Transverse colon (tissue), 4 donors: ENCODE measurements at regions of chr10 and their contacts with region 1.

Region 1: GRCh38 chr10:20927456-20927855 is 30.3 kb upstream of the NEBL start:
- DNase-seq: no peak
- H3K4me3 ChIP-seq: no peak overlapping the region
- H3K27ac ChIP-seq: no peak overlapping the region
- H3K4me1 ChIP-seq: no peaks in the 10 kb centered on the region
- H3K27me3 ChIP-seq: no peaks in the 10 kb centered on the region
- CTCF ChIP-seq: no peak
- EP300 ChIP-seq: no peak
- POLR2A ChIP-seq: no peak

Region 2: DNA sequence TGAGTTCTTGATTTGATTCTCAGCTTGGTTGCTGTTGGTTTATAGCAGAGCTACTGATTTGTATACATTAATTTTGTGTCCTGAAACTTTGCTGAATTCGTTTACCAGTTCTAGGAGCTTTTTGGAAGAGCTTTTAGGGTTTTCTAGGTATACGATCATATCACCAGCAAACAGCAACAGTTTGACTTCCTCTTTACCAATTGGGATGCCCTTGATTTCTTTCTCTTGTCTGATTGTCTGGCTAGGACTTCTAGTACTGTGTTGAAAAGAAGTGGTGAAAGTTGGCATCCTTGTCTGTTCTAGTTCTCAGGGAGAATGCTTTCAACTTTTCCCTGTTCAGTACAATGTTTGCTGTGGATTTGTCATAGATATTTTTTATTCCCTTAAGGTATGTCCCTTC is 1025.0 kb before region 1 on chr10:
- in situ Hi-C with region 1: no loop called
- intact Hi-C with region 1: no loop called
- DNase-seq: no peak
- H3K4me3 ChIP-seq: no peak overlapping the region
- H3K27ac ChIP-seq: no peak overlapping the region
- H3K4me1 ChIP-seq: peaks cover 0 to 7% (median 2%) of the 10 kb centered on the region in 4 donors
- H3K27me3 ChIP-seq: no peaks in the 10 kb centered on the region
- CTCF ChIP-seq: no peak
- EP300 ChIP-seq: no peak
- POLR2A ChIP-seq: no peak

Region 3: GRCh38 chr10:19961076-19962053 is 966.1 kb before region 1 on chr10:
- in situ Hi-C with region 1: no loop called
- intact Hi-C with region 1: loop called (anchors 5 kb)
- DNase-seq: no peak
- H3K4me3 ChIP-seq: no peak overlapping the region
- H3K27ac ChIP-seq: no peak overlapping the region
- H3K4me1 ChIP-seq: peaks cover 0 to 25% (median 5%) of the 10 kb centered on the region in 4 donors
- H3K27me3 ChIP-seq: no peaks in the 10 kb centered on the region
- CTCF ChIP-seq: no peak
- EP300 ChIP-seq: no peak
- POLR2A ChIP-seq: no peak

Region 4: DNA sequence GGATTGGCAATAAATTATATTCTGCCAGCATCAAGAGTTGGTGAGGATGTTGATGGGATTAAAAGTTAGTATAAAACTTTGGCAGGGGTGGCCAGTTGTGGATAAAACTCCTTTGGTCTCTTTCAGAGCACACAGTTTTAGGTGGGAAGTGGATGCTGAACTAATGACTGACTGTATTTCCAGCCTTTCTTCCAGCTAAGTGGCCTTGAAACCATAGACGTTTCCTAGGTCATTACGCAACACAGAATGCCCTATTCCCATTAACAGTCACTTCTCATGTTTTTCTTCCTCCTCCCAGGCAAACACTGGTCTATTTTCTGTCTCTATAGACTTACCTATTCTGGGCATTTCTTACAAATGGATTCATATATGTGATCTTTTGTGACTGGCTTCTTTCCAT is 497.7 kb before region 1 on chr10:
- in situ Hi-C with region 1: no loop called
- intact Hi-C with region 1: no loop called
- DNase-seq: no peak
- H3K4me3 ChIP-seq: no peak overlapping the region
- H3K27ac ChIP-seq: no peak overlapping the region
- H3K4me1 ChIP-seq: no peaks in the 10 kb centered on the region
- H3K27me3 ChIP-seq: no peaks in the 10 kb centered on the region
- CTCF ChIP-seq: no peak
- EP300 ChIP-seq: no peak
- POLR2A ChIP-seq: no peak